Right ventricle myocardium inferior (tissue), 1 donor: ENCODE measurements at regions of chr2 and their contacts with region 1.

Region 1: DNA sequence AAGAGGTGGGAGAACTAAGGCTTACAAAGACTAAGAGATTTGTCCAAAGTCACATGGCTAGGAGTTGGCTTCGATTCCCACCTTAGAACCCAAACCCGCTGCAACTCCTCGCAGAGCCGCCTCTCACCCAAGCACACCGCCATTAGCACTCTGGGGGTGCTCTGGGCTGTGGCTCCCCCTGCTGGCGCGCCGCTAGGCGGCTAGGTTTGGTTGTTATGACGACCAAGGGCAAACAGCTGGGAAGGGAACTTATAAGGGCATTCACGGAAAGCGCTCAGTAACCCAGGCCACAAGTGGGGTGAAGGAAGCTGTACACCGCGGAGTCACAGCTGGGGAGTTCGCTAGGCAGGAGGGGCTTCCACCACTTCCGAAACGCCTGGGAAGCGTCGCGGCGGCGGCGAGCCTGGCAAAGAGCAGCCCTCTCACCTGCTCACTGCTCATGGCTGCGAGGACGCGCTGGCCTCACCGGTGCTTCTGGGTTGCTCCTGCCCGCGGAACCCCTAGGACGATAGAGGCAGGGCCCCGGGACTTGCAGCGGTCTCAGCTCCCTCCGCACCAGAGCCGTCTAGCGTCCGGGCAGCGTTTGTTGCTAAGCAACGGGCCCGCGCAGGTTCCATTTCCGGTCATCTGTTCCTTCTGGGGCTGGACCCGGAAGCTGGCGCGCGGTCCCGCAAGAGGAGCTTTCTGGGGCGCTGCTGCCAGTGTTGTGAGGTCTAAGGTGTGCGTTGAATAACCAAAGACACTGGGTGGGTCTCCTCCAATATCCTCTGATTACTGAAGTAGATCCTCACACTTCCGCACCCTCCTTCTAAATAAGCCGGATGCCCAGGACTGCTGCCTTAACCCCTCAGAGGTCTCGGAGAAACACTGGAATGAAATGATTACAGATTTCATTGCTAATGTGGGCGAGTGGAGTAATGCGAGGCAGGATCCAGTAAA is at the start of gene DNAH7:
- DNase-seq: peak; percentile 96
- ATAC-seq: peak; percentile 96
- total RNA-seq, gene DNAH7: 0.05 TPM

Region 2: DNA sequence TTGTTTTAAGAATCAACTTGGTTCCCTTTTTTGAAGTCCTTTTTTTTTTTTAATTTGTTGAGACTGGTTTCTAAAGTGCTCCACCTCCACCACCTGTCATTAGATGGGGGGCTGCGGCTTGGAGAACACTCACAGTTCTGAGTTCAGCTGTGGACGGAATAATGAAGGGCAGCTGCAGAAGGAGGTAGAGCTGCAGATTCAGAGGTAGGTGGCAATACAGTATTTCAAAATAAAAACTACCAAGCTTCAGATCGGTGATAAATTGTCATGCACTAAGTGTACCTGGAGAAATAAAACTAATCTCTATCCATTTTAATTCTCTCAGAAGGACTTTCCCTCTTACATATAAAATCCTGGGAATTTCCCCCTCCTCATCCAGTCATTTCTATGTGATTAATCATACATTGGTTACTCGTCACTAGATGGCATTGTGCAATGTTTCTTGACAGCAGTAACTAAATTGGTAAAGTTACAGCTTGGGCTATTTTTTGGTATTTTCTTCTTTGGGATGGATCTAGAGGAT is 492.6 kb before region 1 on chr2:
- intact Hi-C with region 1: loop called (anchors 10 kb)
- DNase-seq: no peak
- ATAC-seq: no peak

Region 3: GRCh38 chr2:195666107-195666712 is 402.3 kb before region 1 on chr2:
- intact Hi-C with region 1: loop called (anchors 5 kb)
- DNase-seq: no peak
- ATAC-seq: no peak

Region 4: DNA sequence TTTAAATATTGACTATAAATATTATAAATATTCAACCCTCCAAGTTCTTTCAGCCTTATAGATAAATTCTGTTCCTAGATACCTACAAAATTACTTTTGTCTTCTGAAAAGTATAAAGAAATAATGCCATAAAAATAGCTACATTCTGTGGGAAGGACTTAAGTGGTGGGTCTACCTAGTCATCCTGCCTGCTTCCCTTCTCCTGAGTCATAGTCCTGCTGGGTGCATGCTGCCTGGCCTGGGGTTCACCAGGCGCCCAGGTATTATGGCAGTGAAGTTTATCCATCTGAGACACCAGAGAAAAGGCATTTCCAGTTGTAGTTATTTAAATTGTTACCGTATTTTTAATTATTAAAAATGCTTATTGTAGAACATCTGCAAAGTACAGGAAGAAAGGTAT is 244.1 kb before region 1 on chr2:
- intact Hi-C with region 1: no loop called
- DNase-seq: no peak
- ATAC-seq: no peak